ENCODE measurements at regions of chr17 and their contacts with region 1.

Region 1: GRCh38 chr17:76968707-76969597 is 100.7 kb downstream of the MGAT5B start:
- DNase-seq: peak; percentile 89
- ATAC-seq: peak; percentile 89
- H3K4me3 ChIP-seq: peak overlapping the region; percentile 26 to 58 (median 56)
- H3K4me3 Mint-ChIP-seq: peak overlapping the region; percentile 92
- H3K27ac ChIP-seq: peak overlapping the region; percentile 55 to 76
- H3K27ac Mint-ChIP-seq: peak overlapping the region; percentile 93
- H3K4me1 ChIP-seq: peaks cover 20 to 26% of the 10 kb centered on the region in 2 donors
- H3K4me1 Mint-ChIP-seq: peaks cover 29% of the 10 kb centered on the region
- H3K27me3 ChIP-seq: peaks cover 0 to 31% (median 13%) of the 10 kb centered on the region in 4 experiments
- H3K27me3 Mint-ChIP-seq: peaks cover 26% of the 10 kb centered on the region
- CTCF ChIP-seq: no peak

Region 2: GRCh38 chr17:76957678-76958464 is 11.1 kb before region 1 on chr17:
- CTCF ChIA-PET with region 1: interaction called, 13 read pairs
- POLR2A ChIA-PET with region 1: interaction called, 16 read pairs
- intact Hi-C with region 1: loop called (anchors 1 kb)
- DNase-seq: peak; percentile 82
- ATAC-seq: peak; percentile 83
- H3K4me3 ChIP-seq: peak overlapping the region in 4 of 5 experiments; percentile 16 to 46 (median 38)
- H3K4me3 Mint-ChIP-seq: peak overlapping the region; percentile 88
- H3K27ac ChIP-seq: peak overlapping the region in 1 of 2 donors; percentile 65
- H3K27ac Mint-ChIP-seq: peak overlapping the region; percentile 86
- H3K4me1 ChIP-seq: peaks cover 31 to 32% of the 10 kb centered on the region in 2 donors
- H3K4me1 Mint-ChIP-seq: peaks cover 37% of the 10 kb centered on the region
- H3K27me3 ChIP-seq: peaks cover 0 to 10% (median 4%) of the 10 kb centered on the region in 4 experiments
- H3K27me3 Mint-ChIP-seq: peaks cover 10% of the 10 kb centered on the region
- CTCF ChIP-seq: no peak

Region 3: GRCh38 chr17:76987486-76988093 is 18.6 kb after region 1 on chr17:
- CTCF ChIA-PET with region 1: interaction called, 7 read pairs
- POLR2A ChIA-PET with region 1: interaction called, 12 read pairs
- intact Hi-C with region 1: no loop called
- DNase-seq: no peak
- ATAC-seq: peak; percentile 69
- H3K4me3 ChIP-seq: no peak overlapping the region
- H3K4me3 Mint-ChIP-seq: no peak overlapping the region
- H3K27ac ChIP-seq: no peak overlapping the region
- H3K27ac Mint-ChIP-seq: peak overlapping the region; percentile 46
- H3K4me1 ChIP-seq: peaks cover 17 to 22% of the 10 kb centered on the region in 2 donors
- H3K4me1 Mint-ChIP-seq: peaks cover 18% of the 10 kb centered on the region
- H3K27me3 ChIP-seq: peaks cover 0 to 26% (median 5%) of the 10 kb centered on the region in 4 experiments
- H3K27me3 Mint-ChIP-seq: peaks cover 25% of the 10 kb centered on the region
- CTCF ChIP-seq: no peak

Region 4: GRCh38 chr17:76997981-76998531 is 29.1 kb after region 1 on chr17:
- CTCF ChIA-PET with region 1: interaction called, 4 read pairs
- POLR2A ChIA-PET with region 1: interaction called, 17 read pairs
- intact Hi-C with region 1: loop called (anchors 1 kb)
- DNase-seq: peak; percentile 78
- ATAC-seq: peak; percentile 87
- H3K4me3 ChIP-seq: peak overlapping the region in 3 of 5 experiments; percentile 9 to 41 (median 30)
- H3K4me3 Mint-ChIP-seq: peak overlapping the region; percentile 74
- H3K27ac ChIP-seq: peak overlapping the region in 1 of 2 donors; percentile 52
- H3K27ac Mint-ChIP-seq: peak overlapping the region; percentile 84
- H3K4me1 ChIP-seq: peaks cover 30 to 41% of the 10 kb centered on the region in 2 donors
- H3K4me1 Mint-ChIP-seq: peaks cover 47% of the 10 kb centered on the region
- H3K27me3 ChIP-seq: no peaks in the 10 kb centered on the region
- H3K27me3 Mint-ChIP-seq: peaks cover 13% of the 10 kb centered on the region
- CTCF ChIP-seq: no peak

Region 5: GRCh38 chr17:77019955-77020379 is 51.0 kb after region 1 on chr17:
- CTCF ChIA-PET with region 1: interaction called, 3 read pairs
- POLR2A ChIA-PET with region 1: interaction called, 11 read pairs
- intact Hi-C with region 1: no loop called
- DNase-seq: no peak
- ATAC-seq: no peak
- H3K4me3 ChIP-seq: no peak overlapping the region
- H3K4me3 Mint-ChIP-seq: no peak overlapping the region
- H3K27ac ChIP-seq: no peak overlapping the region
- H3K27ac Mint-ChIP-seq: no peak overlapping the region
- H3K4me1 ChIP-seq: no peaks in the 10 kb centered on the region
- H3K4me1 Mint-ChIP-seq: peaks cover 4% of the 10 kb centered on the region
- H3K27me3 ChIP-seq: peaks cover 0 to 5% (median 1%) of the 10 kb centered on the region in 4 experiments
- H3K27me3 Mint-ChIP-seq: peaks cover 12% of the 10 kb centered on the region
- CTCF ChIP-seq: no peak

Region 6: DNA sequence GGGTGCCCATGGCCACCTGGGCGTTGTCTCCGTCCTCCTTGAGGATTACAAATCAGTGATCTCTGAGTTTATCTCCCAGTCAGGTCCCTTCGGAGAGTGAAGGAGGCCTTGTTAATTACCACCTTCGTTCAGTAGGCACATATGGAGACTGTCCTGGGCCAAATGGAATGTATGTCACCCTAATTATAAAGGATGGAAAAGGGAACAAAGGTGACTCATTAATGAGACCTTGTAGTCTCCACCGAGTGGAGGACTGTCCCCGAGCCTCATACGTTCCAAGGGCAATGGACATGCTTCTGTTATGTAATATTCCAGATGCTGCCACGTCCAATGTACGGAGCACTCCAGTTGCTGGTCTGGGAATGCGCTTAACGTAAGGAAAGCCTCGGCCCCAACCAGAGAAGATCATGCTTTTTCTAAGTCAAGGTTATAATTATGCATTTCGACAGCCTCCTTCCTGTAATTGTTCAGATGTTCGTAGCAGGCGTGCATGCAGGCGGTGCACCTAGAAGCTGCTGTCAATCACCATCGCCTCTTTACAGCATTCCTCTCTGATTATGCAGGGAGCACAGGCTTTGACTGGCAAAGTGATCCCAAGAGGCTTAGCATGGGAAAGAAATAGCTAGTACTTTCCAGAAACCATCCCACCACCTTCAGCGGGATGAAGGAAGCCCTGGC is 149.4 kb after region 1 on chr17:
- CTCF ChIA-PET with region 1: no interaction called
- POLR2A ChIA-PET with region 1: no interaction called
- intact Hi-C with region 1: no loop called
- DNase-seq: no peak
- ATAC-seq: no peak
- H3K4me3 ChIP-seq: no peak overlapping the region
- H3K4me3 Mint-ChIP-seq: no peak overlapping the region
- H3K27ac ChIP-seq: no peak overlapping the region
- H3K27ac Mint-ChIP-seq: no peak overlapping the region
- H3K4me1 ChIP-seq: no peaks in the 10 kb centered on the region
- H3K4me1 Mint-ChIP-seq: no peaks in the 10 kb centered on the region
- H3K27me3 ChIP-seq: no peaks in the 10 kb centered on the region
- H3K27me3 Mint-ChIP-seq: no peaks in the 10 kb centered on the region
- CTCF ChIP-seq: no peak

Measured in B cell (primary cell).